T-cell (primary cell): ENCODE measurements at regions of chr13 and their contacts with region 1.

Region 1: DNA sequence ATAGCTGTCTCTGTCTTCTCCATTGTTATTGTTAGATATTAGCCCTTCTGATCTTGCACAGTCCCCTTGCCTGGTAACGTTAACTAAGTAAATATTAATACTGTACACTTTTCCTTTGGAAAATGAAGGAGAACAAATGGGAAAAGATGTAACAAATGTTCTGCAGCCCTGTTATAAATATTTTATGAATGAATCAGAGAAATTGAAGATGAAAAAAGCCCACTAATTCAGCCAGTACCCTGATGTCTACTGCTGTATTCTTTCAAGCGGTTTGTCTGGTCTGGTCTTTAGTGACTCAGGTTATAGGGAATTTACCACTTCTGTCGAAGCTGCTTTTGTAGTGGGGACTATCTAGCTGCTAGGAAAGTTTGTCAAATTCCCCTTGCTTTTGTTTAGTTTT is 121.0 kb downstream of the COG6 start:
- DNase-seq: no peak
- ATAC-seq: no peak
- H3K4me3 ChIP-seq: no peak overlapping the region
- H3K4me3 Mint-ChIP-seq: no peak overlapping the region
- H3K27ac ChIP-seq: no peak overlapping the region
- H3K27ac Mint-ChIP-seq: peak overlapping the region in 1 of 2 donors; percentile 56
- H3K4me1 ChIP-seq: peaks cover 9% of the 10 kb centered on the region in 2 experiments
- H3K4me1 Mint-ChIP-seq: peaks cover 23 to 43% (median 43%) of the 10 kb centered on the region in 3 donors
- H3K27me3 ChIP-seq: no peaks in the 10 kb centered on the region
- H3K27me3 Mint-ChIP-seq: no peaks in the 10 kb centered on the region

Region 2: DNA sequence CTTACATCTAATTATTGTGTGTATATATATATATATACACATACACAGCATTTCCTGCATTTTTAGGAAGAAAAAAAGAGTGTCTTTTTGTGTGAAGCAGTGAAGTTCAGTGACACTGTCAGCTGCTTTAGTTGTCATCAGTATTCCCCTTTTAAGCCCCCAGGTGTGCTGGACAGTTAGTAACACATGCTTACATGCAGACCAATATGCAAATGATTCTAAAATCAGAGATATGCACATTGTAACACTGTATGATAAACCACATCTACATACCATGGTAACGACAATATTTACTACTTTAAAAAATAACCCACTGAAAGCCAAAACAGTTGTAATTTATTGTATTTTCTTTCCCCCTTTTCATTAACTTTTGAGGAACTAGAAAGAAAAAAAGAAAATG is 190.3 kb before region 1 on chr13:
- CTCF ChIA-PET with region 1: no interaction called
- POLR2A ChIA-PET with region 1: no interaction called
- DNase-seq: no peak
- ATAC-seq: no peak
- H3K4me3 ChIP-seq: no peak overlapping the region
- H3K4me3 Mint-ChIP-seq: no peak overlapping the region
- H3K27ac ChIP-seq: no peak overlapping the region
- H3K27ac Mint-ChIP-seq: no peak overlapping the region
- H3K4me1 ChIP-seq: no peaks in the 10 kb centered on the region
- H3K4me1 Mint-ChIP-seq: no peaks in the 10 kb centered on the region
- H3K27me3 ChIP-seq: no peaks in the 10 kb centered on the region
- H3K27me3 Mint-ChIP-seq: peaks cover 5 to 12% of the 10 kb centered on the region in 2 donors

Region 3: GRCh38 chr13:39811051-39811450 is 34.6 kb after region 1 on chr13:
- CTCF ChIA-PET with region 1: no interaction called
- POLR2A ChIA-PET with region 1: interaction called in 1 of 2 experiments, 10 read pairs
- DNase-seq: peak in 1 of 35 experiments; percentile 11
- ATAC-seq: no peak
- H3K4me3 ChIP-seq: no peak overlapping the region
- H3K4me3 Mint-ChIP-seq: no peak overlapping the region
- H3K27ac ChIP-seq: no peak overlapping the region
- H3K27ac Mint-ChIP-seq: no peak overlapping the region
- H3K4me1 ChIP-seq: no peaks in the 10 kb centered on the region
- H3K4me1 Mint-ChIP-seq: no peaks in the 10 kb centered on the region
- H3K27me3 ChIP-seq: no peaks in the 10 kb centered on the region
- H3K27me3 Mint-ChIP-seq: peaks cover 0 to 4% of the 10 kb centered on the region in 2 donors